ENCODE measurements at regions of chr19 and their contacts with region 1.

Region 1: DNA sequence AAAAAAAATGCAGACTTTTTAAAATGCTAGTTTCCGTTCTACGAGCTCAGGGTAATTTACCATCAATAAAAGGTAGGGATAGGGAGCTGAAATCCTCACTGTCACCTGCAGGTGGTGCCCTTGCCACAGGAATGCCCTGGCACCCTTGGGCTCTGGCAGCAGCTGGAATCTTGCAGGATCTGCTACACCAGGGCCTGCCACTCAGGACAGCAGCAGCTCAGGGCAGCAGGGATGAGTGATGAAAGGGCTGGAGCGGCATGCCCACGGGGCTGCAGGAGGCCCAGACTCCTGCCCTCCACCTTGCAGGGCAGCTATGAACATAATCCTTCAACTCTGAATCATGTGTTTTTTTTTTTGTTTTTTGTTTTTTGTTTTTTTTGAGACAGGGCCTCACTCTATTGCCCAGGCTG is 54.0 kb downstream of the GNG7 start:
- DNase-seq: peak; percentile 86
- CTCF ChIP-seq: peak; percentile 95

Region 2: DNA sequence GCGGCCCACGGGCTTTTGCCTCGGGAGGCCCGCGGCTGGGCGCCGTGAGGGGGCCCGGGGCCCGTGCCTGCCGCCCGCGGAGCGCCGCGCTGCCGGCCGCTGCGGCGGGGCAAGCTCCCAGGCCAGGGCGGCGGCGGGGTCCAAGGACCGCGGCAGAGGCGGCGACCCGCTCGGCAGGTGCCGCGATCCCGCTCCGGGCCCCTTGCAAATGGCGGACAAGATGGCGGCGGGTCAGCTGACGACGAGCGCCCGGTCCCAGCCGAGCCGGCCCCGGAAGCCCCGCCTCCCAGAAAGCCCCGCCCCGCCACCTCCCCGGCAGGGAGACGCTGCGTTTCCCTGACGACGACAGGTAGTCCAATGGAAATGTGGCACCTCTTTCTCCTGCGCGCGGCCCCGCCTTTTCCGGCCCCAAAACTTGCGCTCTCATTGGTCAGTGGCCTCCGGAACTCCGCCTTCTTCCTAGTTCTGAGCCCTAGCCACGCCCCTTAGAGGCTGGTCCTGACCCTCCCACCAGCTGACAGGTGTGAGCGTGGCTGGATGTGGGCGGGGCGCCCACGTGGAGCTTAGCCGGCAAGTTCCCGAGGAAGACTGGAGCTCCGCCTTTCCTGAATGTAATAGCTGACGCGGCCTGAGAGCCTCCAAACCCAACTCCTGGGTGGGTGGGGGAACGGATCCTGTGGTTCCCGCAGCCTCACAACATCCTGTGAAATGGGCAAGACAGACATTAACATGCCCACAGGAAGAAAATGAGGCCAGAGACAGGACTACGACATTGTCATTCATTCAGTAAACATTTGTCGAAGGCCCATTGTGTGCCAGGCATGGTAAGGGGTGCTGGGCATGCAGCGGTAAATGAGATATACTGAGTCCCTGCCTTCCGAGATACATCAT is 496.9 kb before region 1 on chr19 and contains the start of gene AP3D1:
- in situ Hi-C with region 1: loop called (anchors 25 kb)
- DNase-seq: peak; percentile 100
- CTCF ChIP-seq: no peak

Region 3: GRCh38 chr19:2711172-2711874 is 62.8 kb after region 1 on chr19:
- in situ Hi-C with region 1: no loop called
- DNase-seq: no peak
- CTCF ChIP-seq: no peak

Region 4: DNA sequence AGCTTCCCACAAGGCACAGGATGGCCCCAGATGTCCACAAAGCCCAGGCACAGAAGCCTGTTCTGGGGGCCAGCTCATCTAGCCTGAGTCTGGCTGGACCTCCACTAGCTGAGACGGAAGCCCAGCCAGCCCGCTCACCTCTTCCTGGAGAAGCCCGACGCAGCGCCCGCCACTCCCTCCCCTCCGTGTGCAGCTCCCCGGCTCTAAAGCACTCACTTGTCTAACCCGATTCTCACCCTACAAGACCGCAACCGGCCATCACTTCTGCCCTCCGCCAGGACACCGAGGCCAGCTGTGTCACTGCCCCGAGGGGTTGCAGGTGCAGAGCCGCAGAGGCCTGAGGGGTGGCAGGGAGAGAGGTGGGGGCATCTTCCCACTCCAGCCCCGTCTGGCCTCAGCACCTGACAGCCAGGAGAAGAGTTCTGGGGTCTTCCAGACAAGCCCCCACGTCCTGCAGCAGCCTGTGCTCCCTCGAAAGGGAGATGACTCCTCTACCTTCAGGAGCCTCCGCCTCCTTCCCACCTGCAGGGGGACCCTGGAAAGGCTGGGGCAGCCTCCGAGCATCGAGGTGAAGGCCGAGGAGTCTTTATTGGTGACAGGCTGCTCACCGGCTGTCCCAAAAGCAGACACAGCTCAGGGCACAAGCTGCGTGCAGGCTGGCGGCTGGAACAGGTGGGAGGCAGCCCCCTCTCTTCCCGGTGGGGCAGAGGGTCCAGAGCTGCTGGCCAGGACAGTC is 78.5 kb after region 1 on chr19:
- in situ Hi-C with region 1: no loop called
- DNase-seq: no peak
- CTCF ChIP-seq: no peak

Region 5: GRCh38 chr19:2750808-2751443 is 102.4 kb after region 1 on chr19:
- in situ Hi-C with region 1: loop called (anchors 5 kb)
- DNase-seq: no peak
- CTCF ChIP-seq: no peak

Region 6: DNA sequence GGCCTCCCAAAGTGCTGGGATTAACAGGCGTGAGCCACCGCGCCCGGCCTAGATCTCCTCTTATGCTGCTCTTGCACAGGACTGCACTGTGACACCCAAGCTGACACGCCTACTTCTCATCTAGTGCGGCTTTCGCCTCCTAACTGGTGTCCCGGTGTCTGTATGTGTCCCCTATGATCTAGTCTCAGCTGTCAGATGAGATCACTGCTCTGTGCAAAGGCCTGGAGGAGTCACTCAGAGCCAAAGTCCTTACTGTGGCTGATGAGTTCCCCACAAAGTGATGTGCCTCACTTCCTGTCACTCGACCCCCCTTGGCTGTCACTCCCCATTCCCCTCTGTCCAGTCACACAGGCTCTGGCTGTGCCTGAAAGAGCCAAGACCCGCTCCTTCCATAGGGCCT is 221.1 kb after region 1 on chr19:
- in situ Hi-C with region 1: loop called (anchors 10 kb)
- DNase-seq: peak; percentile 23
- CTCF ChIP-seq: no peak

Measured in GM13977 (cell line).